Mucosa of descending colon (tissue), 3 donors: ENCODE measurements at regions of chr1 and their contacts with region 1.

Region 1: DNA sequence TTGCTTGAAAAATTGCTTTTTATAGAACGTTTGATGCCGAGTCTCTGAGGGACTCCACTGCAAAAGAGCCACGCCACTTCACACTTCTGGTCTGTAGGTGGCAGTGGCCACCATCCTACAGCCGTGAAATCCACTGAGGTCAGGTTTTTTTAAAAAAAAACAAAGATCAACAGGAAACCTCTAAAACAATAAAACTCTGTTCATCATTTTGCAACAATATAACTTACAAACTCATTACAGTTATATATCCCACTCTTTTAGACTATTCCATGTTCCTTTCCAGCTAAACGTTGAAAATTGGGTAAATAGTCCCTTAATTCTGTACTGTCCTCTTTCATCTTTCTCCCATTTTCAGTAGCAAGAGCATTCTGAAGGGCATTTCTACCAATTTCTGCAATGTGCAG is 64.6 kb upstream of the FMN2 start:
- DNase-seq: peak in 2 of 3 donors; percentile 62 to 71
- ATAC-seq: peak; percentile 77
- H3K4me3 ChIP-seq: no peak overlapping the region
- H3K4me1 ChIP-seq: peaks cover 3% of the 10 kb centered on the region
- CTCF ChIP-seq: peak; percentile 42

Region 2: GRCh38 chr1:240173836-240174235 is 146.8 kb after region 1 on chr1:
- intact Hi-C with region 1: loop called in 1 of 2 experiments (anchors 10 kb)
- DNase-seq: no peak
- ATAC-seq: no peak
- H3K4me3 ChIP-seq: no peak overlapping the region
- H3K4me1 ChIP-seq: no peaks in the 10 kb centered on the region
- CTCF ChIP-seq: no peak

Region 3: DNA sequence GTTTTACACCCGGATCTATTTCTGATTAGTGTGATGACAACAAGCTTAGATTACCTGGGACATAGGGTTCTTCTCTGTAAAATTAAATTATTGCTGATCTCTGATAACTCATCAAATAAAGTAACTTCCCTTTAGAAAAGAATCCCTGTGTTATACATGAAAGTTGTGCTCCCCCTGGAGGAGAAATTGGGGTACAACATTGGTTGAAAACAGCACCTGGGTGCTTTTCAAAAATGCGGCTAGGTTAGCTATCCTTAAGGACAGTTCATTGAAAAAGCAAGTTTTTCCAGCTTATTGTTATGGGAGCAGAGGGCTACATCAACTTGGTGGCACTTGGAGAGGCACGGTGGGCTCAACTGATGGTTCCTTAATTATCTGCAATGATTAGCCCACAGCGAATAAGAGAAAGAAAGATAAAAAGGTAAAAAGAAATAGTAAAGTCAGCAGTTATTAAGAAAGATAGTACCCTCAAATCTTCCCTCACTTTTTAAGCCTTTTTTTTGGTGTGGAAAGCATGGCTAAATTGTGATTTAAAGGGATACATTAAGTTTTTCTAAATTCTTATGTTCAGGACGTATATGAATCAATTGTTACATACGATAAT is 162.4 kb after region 1 on chr1:
- intact Hi-C with region 1: loop called in 1 of 2 experiments (anchors 10 kb)
- DNase-seq: peak in 1 of 3 donors; percentile 69
- ATAC-seq: peak; percentile 57
- H3K4me3 ChIP-seq: no peak overlapping the region
- H3K4me1 ChIP-seq: no peaks in the 10 kb centered on the region
- CTCF ChIP-seq: peak; percentile 62

Region 4: GRCh38 chr1:240285541-240285940 is 258.5 kb after region 1 on chr1:
- intact Hi-C with region 1: no loop called
- DNase-seq: no peak
- ATAC-seq: no peak
- H3K4me3 ChIP-seq: no peak overlapping the region
- H3K4me1 ChIP-seq: peaks cover 8% of the 10 kb centered on the region
- CTCF ChIP-seq: no peak

Region 5: GRCh38 chr1:240337781-240338180 is 310.7 kb after region 1 on chr1:
- intact Hi-C with region 1: no loop called
- DNase-seq: no peak
- ATAC-seq: no peak
- H3K4me3 ChIP-seq: no peak overlapping the region
- H3K4me1 ChIP-seq: no peaks in the 10 kb centered on the region
- CTCF ChIP-seq: no peak

Region 6: GRCh38 chr1:240691521-240692338 is 664.7 kb after region 1 on chr1:
- intact Hi-C with region 1: loop called in 1 of 2 experiments (anchors 10 kb)
- DNase-seq: peak in 2 of 3 donors; percentile 38 to 45
- ATAC-seq: peak; percentile 55
- H3K4me3 ChIP-seq: no peak overlapping the region
- H3K4me1 ChIP-seq: no peaks in the 10 kb centered on the region
- CTCF ChIP-seq: peak; percentile 34